Activated CD4-positive, alpha-beta T cell treated with anti-CD3 and anti-CD28 coated beads, Interleukin-2, amount 10 ng/mL, durations not matched to agents 24 days and 14 days (primary cell): ENCODE measurements at regions of chr10 and their contacts with region 1.

Region 1: GRCh38 chr10:12594448-12594944 is 245.1 kb downstream of the CAMK1D start:
- DNase-seq: peak; percentile 87
- H3K4me3 Mint-ChIP-seq: peak overlapping the region; percentile 61
- H3K27ac Mint-ChIP-seq: peak overlapping the region; percentile 88
- H3K4me1 Mint-ChIP-seq: peaks cover 80% of the 10 kb centered on the region
- H3K27me3 Mint-ChIP-seq: no peaks in the 10 kb centered on the region

Region 2: GRCh38 chr10:12605580-12606405 is 11.3 kb after region 1 on chr10:
- intact Hi-C with region 1: loop called (anchors 1 kb)
- DNase-seq: peak; percentile 89
- H3K4me3 Mint-ChIP-seq: peak overlapping the region; percentile 86
- H3K27ac Mint-ChIP-seq: peak overlapping the region; percentile 99
- H3K4me1 Mint-ChIP-seq: peaks cover 25% of the 10 kb centered on the region
- H3K27me3 Mint-ChIP-seq: no peaks in the 10 kb centered on the region